ENCODE measurements at regions of chr9 and their contacts with region 1.

Region 1: DNA sequence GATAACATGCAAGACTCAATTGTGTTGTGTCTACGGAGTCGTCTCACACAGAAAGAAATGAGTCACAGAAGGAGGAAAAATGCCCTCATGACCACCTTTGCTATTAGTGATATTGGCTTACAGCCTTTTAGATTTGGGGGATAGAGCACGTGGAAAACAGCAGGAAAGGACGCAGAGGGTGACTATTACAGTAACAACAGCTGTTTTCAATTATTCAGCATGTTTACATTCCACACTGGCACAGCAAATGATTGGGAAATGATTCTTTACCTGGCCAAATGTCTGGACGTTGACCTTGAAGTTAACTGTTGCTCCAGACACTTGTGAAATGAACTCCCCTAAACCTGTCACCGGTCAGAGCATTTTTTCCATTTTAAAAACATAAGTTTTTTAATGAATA is 46.8 kb downstream of the APTX start:
- DNase-seq: peak; percentile 66
- H3K4me3 ChIP-seq: no peak overlapping the region
- H3K27me3 ChIP-seq: no peaks in the 10 kb centered on the region
- CTCF ChIP-seq: no peak

Region 2: DNA sequence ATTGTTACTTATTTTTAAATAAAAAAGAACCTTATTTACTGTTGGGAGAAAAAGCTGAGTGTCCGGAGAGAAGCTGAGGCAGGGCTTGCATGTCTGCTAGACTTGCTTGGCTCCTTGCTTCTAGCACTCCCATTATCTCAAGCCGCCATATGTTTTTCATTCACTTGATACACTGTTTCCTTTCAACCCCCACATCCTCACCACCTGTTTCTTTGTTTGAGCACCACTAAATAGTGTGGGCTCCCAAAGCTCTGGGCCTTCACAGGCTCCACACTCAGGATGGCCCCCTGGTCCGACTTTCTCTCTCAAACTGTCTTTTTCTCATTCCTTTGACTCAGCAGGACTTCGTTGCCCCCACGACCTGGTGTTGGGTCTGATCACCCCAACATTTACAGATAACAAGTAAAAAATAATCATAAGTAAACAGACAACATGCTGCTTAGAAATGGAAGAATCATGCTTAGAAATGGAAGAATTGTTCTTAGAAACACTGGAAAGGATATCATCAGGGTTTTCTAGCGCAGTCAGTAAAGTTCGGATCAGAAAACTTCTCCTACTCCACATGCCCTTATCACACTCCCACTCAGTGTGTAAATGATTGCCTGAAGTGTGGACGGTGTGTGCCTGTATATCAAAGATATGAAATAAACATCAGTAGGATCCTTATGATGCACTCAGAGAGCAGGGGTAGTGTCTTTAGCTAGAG is 11.7 kb before region 1 on chr9:
- CTCF ChIA-PET with region 1: interaction called, 12 read pairs
- POLR2A ChIA-PET with region 1: no interaction called
- DNase-seq: no peak
- H3K4me3 ChIP-seq: no peak overlapping the region
- H3K27me3 ChIP-seq: no peaks in the 10 kb centered on the region
- CTCF ChIP-seq: no peak

Region 3: GRCh38 chr9:32968101-32969011 is 13.7 kb after region 1 on chr9:
- CTCF ChIA-PET with region 1: interaction called, 11 read pairs
- POLR2A ChIA-PET with region 1: no interaction called
- DNase-seq: no peak
- H3K4me3 ChIP-seq: no peak overlapping the region
- H3K27me3 ChIP-seq: no peaks in the 10 kb centered on the region
- CTCF ChIP-seq: peak; percentile 72